Prostate gland (tissue), 2 donors: ENCODE measurements at regions of chrX and their contacts with region 1.

Region 1: GRCh38 chrX:81201671-81202455 is at the starts of genes HMGN5 and SH3BGRL:
- DNase-seq: peak; percentile 64
- H3K4me3 ChIP-seq: peak within 1 kb of the TSS; percentile 43 to 46
- H3K27ac ChIP-seq: peak within 1 kb of the TSS; percentile 65 to 75
- H3K4me1 ChIP-seq: no peaks in the 10 kb centered on the region
- H3K27me3 ChIP-seq: no peaks in the 10 kb centered on the region
- CTCF ChIP-seq: no peak
- POLR2A ChIP-seq: no peak
- total RNA-seq, gene HMGN5: 5.6 to 63.5 TPM
- total RNA-seq, gene SH3BGRL: 108 to 181 TPM

Region 2: GRCh38 chrX:81238172-81238571 is 36.3 kb after region 1 on chrX:
- intact Hi-C with region 1: no loop called
- DNase-seq: no peak
- H3K4me3 ChIP-seq: no peak overlapping the region
- H3K27ac ChIP-seq: no peak overlapping the region
- H3K4me1 ChIP-seq: no peaks in the 10 kb centered on the region
- H3K27me3 ChIP-seq: no peaks in the 10 kb centered on the region
- CTCF ChIP-seq: no peak
- POLR2A ChIP-seq: no peak

Region 3: GRCh38 chrX:81259714-81260395 is 58.0 kb after region 1 on chrX:
- intact Hi-C with region 1: loop called (anchors 10 kb)
- DNase-seq: no peak
- H3K4me3 ChIP-seq: no peak overlapping the region
- H3K27ac ChIP-seq: peak overlapping the region in 1 of 2 donors; percentile 18
- H3K4me1 ChIP-seq: no peaks in the 10 kb centered on the region
- H3K27me3 ChIP-seq: no peaks in the 10 kb centered on the region
- CTCF ChIP-seq: no peak
- POLR2A ChIP-seq: no peak

Region 4: DNA sequence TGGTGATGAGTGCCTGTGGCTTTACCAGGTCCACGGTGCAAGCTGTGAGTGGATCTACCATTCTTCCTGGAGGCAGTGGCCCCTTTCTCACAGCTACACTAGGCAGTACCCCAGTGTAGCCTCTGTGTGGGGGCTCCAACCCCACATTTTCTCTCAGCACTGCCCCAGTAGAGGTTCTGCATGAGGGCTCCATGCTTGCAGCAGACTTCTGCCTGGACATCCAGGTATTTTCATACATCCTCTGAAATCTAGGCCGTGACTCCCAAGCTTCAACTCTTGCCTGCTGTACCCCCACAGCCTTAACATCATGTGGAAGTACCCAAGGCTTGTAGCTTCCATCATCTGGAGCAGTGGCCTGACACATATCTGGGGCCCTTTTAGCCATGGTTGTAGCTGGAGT is 90.1 kb after region 1 on chrX:
- intact Hi-C with region 1: no loop called
- DNase-seq: no peak
- H3K4me3 ChIP-seq: no peak overlapping the region
- H3K27ac ChIP-seq: no peak overlapping the region
- H3K4me1 ChIP-seq: no peaks in the 10 kb centered on the region
- H3K27me3 ChIP-seq: no peaks in the 10 kb centered on the region
- CTCF ChIP-seq: no peak
- POLR2A ChIP-seq: no peak